Thyroid gland (tissue), 4 donors: ENCODE measurements at regions of chr14 and their contacts with region 1.

Region 1: DNA sequence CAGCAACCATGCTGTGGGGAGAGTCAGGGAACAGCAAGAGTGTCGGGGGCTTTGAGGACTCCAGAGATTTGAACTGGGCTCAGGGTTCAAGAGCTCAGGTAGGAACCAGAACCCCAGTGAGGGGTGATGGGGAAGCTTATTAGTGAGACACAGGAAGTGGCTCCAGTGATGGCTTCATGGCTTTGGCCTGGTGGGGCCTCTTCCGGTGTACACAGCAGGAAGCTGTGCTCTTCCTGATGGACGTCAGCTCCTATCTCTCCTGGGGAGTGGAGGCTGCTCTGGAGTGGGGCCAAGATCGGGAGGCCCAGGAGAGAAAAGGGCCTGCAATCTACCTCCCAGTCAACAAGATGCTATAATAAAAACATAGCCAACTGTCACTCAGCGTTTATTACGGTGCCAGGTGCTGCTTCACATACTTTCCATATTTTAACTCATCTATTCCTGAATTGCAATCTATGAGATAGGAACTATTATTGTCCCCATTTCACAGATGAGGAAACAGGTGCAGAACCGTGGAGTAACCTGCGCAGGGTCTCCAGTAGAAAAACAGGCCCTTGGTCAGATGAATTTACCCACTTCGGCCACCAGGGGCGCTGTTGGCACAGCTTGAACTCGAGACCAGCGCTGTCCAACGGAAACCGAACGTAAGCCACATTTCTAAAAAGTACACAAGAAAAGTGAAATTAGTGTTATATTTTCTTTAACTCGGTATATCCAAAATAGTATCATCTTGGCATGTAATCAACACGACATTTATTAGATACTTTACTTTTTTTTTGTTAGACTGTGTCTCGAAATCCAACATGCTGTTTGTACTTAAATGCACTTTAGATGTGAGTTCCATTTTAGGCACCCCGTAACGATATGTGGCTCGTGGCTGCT is 63.6 kb upstream of the DLK1 start:
- DNase-seq: peak; percentile 51 to 69
- H3K4me3 ChIP-seq: no peak overlapping the region
- H3K27ac ChIP-seq: no peak overlapping the region
- H3K4me1 ChIP-seq: no peaks in the 10 kb centered on the region
- H3K27me3 ChIP-seq: no peaks in the 10 kb centered on the region
- CTCF ChIP-seq: peak; percentile 73 to 99 (median 84)
- POLR2A ChIP-seq: no peak

Region 2: GRCh38 chr14:100271247-100271939 is 391.7 kb before region 1 on chr14:
- intact Hi-C with region 1: no loop called
- DNase-seq: peak; percentile 71 to 78
- H3K4me3 ChIP-seq: no peak overlapping the region
- H3K27ac ChIP-seq: peak overlapping the region; percentile 42 to 58 (median 47)
- H3K4me1 ChIP-seq: peaks cover 37 to 46% of the 10 kb centered on the region in 2 donors
- H3K27me3 ChIP-seq: no peaks in the 10 kb centered on the region
- CTCF ChIP-seq: peak; percentile 31 to 78 (median 56)
- POLR2A ChIP-seq: no peak

Region 3: DNA sequence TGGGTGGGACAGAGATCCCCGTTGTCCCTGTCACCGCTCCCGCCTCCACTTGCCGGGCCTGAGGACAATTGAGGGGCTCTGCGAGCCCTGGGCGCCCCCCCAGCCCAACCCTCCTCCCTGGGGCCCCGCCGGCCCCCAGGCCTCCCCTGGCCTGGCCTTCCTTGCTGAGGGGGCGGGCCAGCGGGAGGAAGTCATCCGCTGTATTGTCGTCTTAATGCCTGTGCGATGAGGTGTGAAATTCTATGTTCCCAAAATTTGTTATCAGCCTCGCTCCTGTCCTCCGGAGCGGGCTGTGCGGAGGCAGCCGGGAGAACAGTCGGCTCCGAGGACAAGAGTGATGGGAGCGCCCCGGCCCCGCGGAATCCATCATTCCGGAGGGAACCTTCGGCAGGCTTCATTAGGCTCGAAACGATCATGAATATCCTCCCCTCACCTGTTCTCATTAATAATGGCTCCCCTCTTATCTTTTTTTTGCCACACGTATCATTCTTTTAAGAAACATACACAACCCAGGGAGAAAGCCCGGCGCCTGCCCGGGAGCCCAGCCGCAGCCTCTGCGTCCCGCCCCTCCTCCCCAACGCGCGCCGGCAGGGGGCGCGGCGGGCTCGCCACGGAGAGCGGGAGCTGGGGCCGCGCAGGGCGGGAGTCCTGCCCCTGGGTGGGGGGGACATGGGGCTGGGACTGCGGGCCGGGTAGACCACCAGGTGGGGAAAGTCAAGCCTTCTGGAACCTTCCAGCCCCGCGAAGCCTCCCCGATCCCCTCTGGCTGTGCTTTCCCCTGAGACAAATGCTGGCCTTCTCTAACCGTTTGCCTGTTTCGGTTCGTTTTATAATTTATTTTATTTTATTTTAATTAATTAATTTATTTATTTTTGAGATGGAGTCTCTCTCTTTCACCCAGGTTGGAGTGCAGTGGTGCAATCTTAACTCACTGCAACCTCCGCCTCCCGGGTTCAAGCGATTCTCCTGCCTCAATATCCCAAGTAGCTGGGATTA is 46.5 kb after region 1 on chr14:
- intact Hi-C with region 1: no loop called
- DNase-seq: peak; percentile 6 to 36
- H3K4me3 ChIP-seq: no peak overlapping the region
- H3K27ac ChIP-seq: no peak overlapping the region
- H3K4me1 ChIP-seq: peaks cover 4 to 14% of the 10 kb centered on the region in 2 donors
- H3K27me3 ChIP-seq: peaks cover 6% of the 10 kb centered on the region
- CTCF ChIP-seq: peak in 3 of 6 experiments; percentile 56 to 75 (median 57)
- POLR2A ChIP-seq: no peak

Region 4: GRCh38 chr14:101235335-101236103 is 572.4 kb after region 1 on chr14:
- intact Hi-C with region 1: loop called (anchors 10 kb)
- DNase-seq: peak; percentile 61 to 69
- H3K4me3 ChIP-seq: no peak overlapping the region
- H3K27ac ChIP-seq: no peak overlapping the region
- H3K4me1 ChIP-seq: no peaks in the 10 kb centered on the region
- H3K27me3 ChIP-seq: no peaks in the 10 kb centered on the region
- CTCF ChIP-seq: peak in 5 of 6 experiments; percentile 24 to 76 (median 62)
- POLR2A ChIP-seq: no peak